WTC11 (cell line): ENCODE measurements at regions of chr1 and their contacts with region 1.

Region 1: DNA sequence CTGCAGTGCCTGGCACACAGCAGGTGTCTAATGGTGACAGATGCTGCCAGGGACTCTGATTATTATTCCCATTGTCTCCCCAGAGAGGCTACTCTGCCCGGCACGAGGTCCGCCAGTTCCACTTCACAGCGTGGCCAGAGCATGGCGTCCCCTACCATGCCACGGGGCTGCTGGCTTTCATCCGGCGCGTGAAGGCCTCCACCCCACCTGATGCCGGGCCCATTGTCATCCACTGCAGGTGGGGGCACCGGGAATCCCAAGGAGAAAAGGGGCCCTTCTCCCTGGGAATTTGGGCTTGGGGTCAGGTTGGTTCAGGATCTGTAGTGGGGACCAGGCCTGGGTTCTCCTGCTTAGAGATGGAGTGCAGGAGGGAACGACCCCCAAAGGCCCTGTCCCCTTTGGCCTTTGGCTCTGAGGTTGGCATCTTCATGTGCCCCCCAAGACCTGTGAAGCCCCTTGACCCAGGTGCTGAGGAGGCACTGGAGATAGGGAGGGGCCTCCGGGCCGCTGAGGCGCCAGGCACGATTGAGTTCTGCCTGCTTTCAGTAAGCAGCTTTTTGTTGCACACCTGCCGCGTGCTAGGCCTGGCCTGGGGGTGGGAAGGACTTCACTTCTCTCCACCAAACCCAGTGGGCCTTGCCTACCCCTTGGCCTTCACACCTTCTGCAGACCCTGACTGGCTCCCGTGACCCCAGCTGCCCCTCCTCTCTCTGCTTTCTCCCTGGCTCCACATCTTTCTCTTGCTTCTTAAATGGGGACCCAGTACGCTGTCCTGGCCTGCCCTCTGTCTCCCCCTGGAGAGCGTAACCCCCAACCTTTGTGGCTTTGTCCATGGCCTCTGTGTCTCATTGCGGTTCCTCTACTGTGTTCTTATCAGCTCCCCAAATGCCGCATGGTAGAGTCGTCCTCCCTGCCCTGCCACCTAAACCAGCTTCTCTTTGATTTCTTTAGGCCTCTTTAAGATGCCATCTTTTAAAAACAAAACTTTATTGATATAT is 76.4 kb downstream of the PTPRU start:
- DNase-seq: peak; percentile 56
- ATAC-seq: peak; percentile 91
- H3K4me3 Mint-ChIP-seq: no peak overlapping the region
- H3K27ac Mint-ChIP-seq: 0 out of 2 replicates have a peak overlapping the region, but pooled peaks have one; percentile 30
- H3K4me1 Mint-ChIP-seq: peaks cover 9% of the 10 kb centered on the region
- H3K27me3 Mint-ChIP-seq: no peaks in the 10 kb centered on the region; the same call in 1 of the 2 replicates
- CTCF ChIP-seq: no peak

Region 2: GRCh38 chr1:29237669-29238619 is 74.8 kb before region 1 on chr1:
- CTCF ChIA-PET with region 1: interaction called, 12 read pairs
- POLR2A ChIA-PET with region 1: no interaction called
- DNase-seq: peak; percentile 68
- ATAC-seq: peak; percentile 5
- H3K4me3 Mint-ChIP-seq: peak overlapping the region; percentile 85
- H3K27ac Mint-ChIP-seq: no peak overlapping the region
- H3K4me1 Mint-ChIP-seq: peaks cover 37% of the 10 kb centered on the region
- H3K27me3 Mint-ChIP-seq: peaks cover 56% of the 10 kb centered on the region
- CTCF ChIP-seq: no peak

Region 3: DNA sequence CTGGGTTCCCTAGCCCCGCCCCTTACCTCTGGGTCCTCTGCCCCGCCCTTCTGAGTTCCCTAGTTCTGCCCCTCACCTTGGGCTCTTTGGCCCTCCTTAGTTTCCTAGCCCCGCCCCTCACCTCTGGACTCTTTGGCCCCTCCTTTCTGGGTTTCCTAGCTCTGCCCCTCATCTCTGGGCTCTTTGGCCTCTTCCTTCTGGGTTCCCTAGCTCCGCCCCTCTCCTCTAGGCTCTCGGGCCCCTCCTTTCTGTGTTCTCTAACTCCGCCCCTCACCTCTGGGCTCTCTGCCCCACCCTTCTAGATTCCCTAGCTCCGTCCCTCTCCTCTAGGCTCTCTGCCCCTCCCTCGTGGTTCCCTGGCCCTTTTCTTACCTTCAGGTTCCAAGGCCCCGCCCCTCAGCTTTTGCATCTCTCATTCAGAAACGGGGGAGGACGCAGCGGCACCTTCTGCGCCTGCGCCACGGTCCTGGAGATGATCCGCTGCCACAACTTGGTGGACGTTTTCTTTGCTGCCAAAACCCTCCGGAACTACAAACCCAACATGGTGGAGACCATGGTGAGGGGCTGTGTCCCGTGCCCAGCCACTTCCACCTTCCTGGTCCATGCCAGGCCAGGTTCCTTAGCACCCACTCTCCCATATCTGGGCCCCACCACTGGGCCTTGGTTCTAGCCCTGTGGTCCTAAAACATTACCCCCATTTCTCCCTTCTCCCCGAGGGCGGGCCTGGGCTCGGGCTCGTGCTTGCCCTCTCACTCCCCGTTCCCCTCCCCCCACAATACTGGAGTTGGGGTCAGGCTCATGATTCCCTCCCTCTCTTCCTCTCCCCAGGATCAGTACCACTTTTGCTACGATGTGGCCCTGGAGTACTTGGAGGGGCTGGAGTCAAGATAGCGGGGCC is 12.3 kb after region 1 on chr1:
- CTCF ChIA-PET with region 1: interaction called, 16 read pairs
- POLR2A ChIA-PET with region 1: no interaction called
- DNase-seq: peak; percentile 99
- ATAC-seq: peak; percentile 97
- H3K4me3 Mint-ChIP-seq: peak overlapping the region; percentile 64
- H3K27ac Mint-ChIP-seq: peak overlapping the region; percentile 36
- H3K4me1 Mint-ChIP-seq: peaks cover 17% of the 10 kb centered on the region
- H3K27me3 Mint-ChIP-seq: no peaks in the 10 kb centered on the region
- CTCF ChIP-seq: no peak